Gastrocnemius medialis (tissue), 4 donors: ENCODE measurements at regions of chr16 and their contacts with region 1.

Region 1: DNA sequence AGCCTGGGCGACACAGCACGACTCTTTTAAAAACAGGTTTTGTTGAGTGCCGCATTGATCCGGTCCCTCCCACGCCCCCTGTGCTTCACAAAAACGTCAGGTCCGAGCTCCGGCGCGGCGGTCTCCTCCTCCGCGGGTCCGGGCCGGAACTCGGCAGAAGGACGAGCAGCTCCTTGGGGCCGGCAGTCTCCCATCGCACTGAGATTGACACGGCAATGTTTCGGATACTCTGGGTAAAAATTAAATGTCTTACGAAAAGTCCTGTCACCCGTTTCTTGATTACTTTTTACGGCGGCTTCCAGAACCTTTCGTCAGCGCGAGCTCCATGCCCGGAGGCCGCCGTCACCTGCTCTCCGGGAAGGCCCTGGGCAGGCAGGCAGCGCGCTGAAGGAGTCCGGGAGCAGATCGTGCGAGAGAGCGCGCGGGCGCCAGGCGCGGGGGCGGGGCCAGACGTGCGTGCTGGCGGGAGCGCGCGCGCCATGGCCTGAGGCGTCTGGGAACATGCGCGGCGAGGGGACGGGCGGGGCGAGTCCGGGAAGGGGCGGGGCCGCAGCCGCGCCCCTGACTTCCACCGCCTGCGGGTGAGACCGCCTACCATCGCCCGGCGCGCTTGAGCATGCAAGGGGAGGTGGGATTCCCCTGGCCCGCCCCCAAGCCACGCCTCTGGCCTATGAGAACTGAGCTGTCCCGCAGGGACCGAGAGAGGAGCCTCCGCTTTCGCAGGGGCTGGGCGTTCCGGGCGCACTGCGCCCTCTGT is 11.7 kb upstream of the SRL start:
- DNase-seq: peak; percentile 98 to 100
- ATAC-seq: peak; percentile 91 to 92
- H3K4me3 ChIP-seq: peak overlapping the region; percentile 72 to 77 (median 74)
- H3K27ac ChIP-seq: peak overlapping the region; percentile 94 to 96 (median 96)
- H3K4me1 ChIP-seq: peaks cover 9 to 15% of the 10 kb centered on the region in 2 donors
- H3K27me3 ChIP-seq: no peaks in the 10 kb centered on the region
- CTCF ChIP-seq: no peak
- POLR2A ChIP-seq: peak; percentile 87 to 88

Region 2: DNA sequence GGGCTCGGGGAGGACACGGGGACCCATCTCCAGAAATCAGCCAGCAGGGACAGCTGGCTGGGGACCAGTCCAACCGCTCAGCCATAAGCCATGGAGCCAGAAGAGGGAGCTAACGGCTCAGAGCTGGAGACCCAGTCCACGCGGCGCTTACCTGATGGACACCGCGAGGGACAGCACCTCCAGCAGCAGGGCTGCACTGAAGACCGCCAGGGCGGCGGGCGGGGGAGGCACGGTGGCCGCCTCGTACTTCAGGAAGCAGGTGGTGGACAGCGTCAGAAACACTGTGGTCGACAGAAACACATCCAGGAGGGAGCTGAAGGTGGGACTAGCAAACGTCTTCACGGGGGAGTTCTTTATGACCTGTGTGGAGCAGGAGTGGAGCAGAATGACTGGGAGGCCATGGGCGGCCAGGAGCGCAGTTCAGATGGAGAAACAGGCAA is 270.5 kb before region 1 on chr16:
- in situ Hi-C with region 1: no loop called
- intact Hi-C with region 1: loop called (anchors 1 kb)
- DNase-seq: peak; percentile 50 to 78
- ATAC-seq: peak; percentile 79 to 98
- H3K4me3 ChIP-seq: no peak overlapping the region
- H3K27ac ChIP-seq: peak overlapping the region in 1 of 4 donors; percentile 16
- H3K4me1 ChIP-seq: no peaks in the 10 kb centered on the region
- H3K27me3 ChIP-seq: no peaks in the 10 kb centered on the region
- CTCF ChIP-seq: peak; percentile 64 to 77 (median 64)
- POLR2A ChIP-seq: no peak

Region 3: DNA sequence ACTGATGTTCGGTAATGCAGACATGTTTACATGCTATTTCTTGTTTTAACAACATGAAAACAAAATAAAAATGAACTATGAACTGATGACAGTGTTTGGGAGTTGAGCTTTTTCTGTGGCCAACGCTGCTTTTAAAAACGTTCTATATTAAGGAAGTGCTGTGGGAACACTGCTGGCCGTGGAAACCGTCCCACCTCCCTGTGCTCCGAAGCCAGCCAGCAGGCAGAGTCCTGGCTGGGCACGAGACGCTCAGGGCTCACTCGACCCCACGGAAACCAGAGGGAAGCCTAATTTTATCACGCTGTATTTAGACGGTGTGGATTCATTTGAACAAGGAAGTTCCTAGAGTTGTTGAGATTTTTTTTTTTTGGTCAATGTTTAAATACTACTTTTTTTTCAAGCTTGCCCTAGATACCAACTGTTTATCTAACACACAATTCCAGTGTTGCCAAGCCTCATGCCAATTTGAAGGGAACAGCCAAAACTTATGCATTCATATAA is 163.2 kb before region 1 on chr16:
- in situ Hi-C with region 1: no loop called
- intact Hi-C with region 1: loop called (anchors 5 kb)
- DNase-seq: peak; percentile 66 to 74
- ATAC-seq: peak; percentile 8 to 9
- H3K4me3 ChIP-seq: peak overlapping the region; percentile 2 to 15 (median 6)
- H3K27ac ChIP-seq: peak overlapping the region; percentile 90 to 95 (median 94)
- H3K4me1 ChIP-seq: peaks cover 88% of the 10 kb centered on the region in 2 donors
- H3K27me3 ChIP-seq: no peaks in the 10 kb centered on the region
- CTCF ChIP-seq: no peak
- POLR2A ChIP-seq: peak in 1 of 2 donors; percentile 38

Region 4: GRCh38 chr16:4183237-4184036 is 70.1 kb before region 1 on chr16:
- in situ Hi-C with region 1: no loop called
- intact Hi-C with region 1: loop called (anchors 1 kb)
- DNase-seq: peak; percentile 80 to 90
- ATAC-seq: peak; percentile 83 to 90
- H3K4me3 ChIP-seq: peak overlapping the region; percentile 65 to 96 (median 76)
- H3K27ac ChIP-seq: peak overlapping the region; percentile 93 to 98 (median 94)
- H3K4me1 ChIP-seq: peaks cover 4 to 11% of the 10 kb centered on the region in 2 donors
- H3K27me3 ChIP-seq: no peaks in the 10 kb centered on the region
- CTCF ChIP-seq: peak in 3 of 5 experiments; percentile 22 to 51 (median 43)
- POLR2A ChIP-seq: no peak

Region 5: GRCh38 chr16:4271176-4272066 is 17.8 kb after region 1 on chr16:
- in situ Hi-C with region 1: no loop called
- intact Hi-C with region 1: loop called (anchors 1 kb)
- DNase-seq: peak; percentile 92 to 93
- ATAC-seq: peak; percentile 85
- H3K4me3 ChIP-seq: peak overlapping the region; percentile 88 to 98 (median 90)
- H3K27ac ChIP-seq: peak overlapping the region; percentile 90 to 98 (median 96)
- H3K4me1 ChIP-seq: peaks cover 14 to 27% of the 10 kb centered on the region in 2 donors
- H3K27me3 ChIP-seq: no peaks in the 10 kb centered on the region
- CTCF ChIP-seq: peak in 2 of 5 experiments; percentile 22 to 49
- POLR2A ChIP-seq: peak; percentile 86 to 92